Heart left ventricle (tissue), 16 donors: ENCODE measurements at regions of chr6 and their contacts with region 1.

Region 1: GRCh38 chr6:35452186-35453090 is at the start of gene FANCE:
- DNase-seq: peak; percentile 94 to 98 (median 95)
- ATAC-seq: peak; percentile 89 to 96 (median 96)
- H3K4me3 ChIP-seq: peak within 1 kb of the TSS; percentile 45 to 88 (median 68)
- H3K27ac ChIP-seq: peak within 1 kb of the TSS in 11 of 12 donors; percentile 67 to 84 (median 77)
- H3K4me1 ChIP-seq: peaks cover 2 to 38% (median 25%) of the 10 kb centered on the region in 12 donors
- H3K27me3 ChIP-seq: no peaks in the 10 kb centered on the region
- CTCF ChIP-seq: peak in 2 of 12 donors; percentile 5 to 9
- POLR2A ChIP-seq: peak in 1 of 2 donors; percentile 48
- total RNA-seq, gene FANCE: 2.1 to 4.6 (median 3.8) TPM

Region 2: GRCh38 chr6:35297601-35298481 is 154.6 kb before region 1 on chr6 and contains the start of gene DEF6:
- intact Hi-C with region 1: loop called in 8 of 10 experiments (anchors 1 to 5 kb)
- DNase-seq: peak; percentile 79 to 90 (median 84)
- ATAC-seq: peak; percentile 82 to 94 (median 88)
- H3K4me3 ChIP-seq: peak within 1 kb of the TSS in 11 of 12 donors; percentile 20 to 71 (median 47)
- H3K27ac ChIP-seq: peak within 1 kb of the TSS in 7 of 12 donors; percentile 41 to 93 (median 49)
- H3K4me1 ChIP-seq: peaks cover 0 to 58% (median 15%) of the 10 kb centered on the region in 12 donors
- H3K27me3 ChIP-seq: no peaks in the 10 kb centered on the region
- CTCF ChIP-seq: peak; percentile 54 to 82 (median 70)
- POLR2A ChIP-seq: peak in 1 of 2 donors; percentile 32
- total RNA-seq, gene DEF6: 0.38 to 14.4 (median 1.3) TPM